ENCODE measurements at regions of chr19 and their contacts with region 1.

Region 1: GRCh38 chr19:47391510-47392223 is 27.7 kb downstream of the MEIS3 start:
- DNase-seq: peak; percentile 45 to 86 (median 77)
- ATAC-seq: peak; percentile 77 to 80 (median 78)
- H3K4me3 ChIP-seq: no peak overlapping the region
- H3K4me3 Mint-ChIP-seq: no peak overlapping the region
- H3K27ac ChIP-seq: no peak overlapping the region
- H3K27ac Mint-ChIP-seq: no peak overlapping the region
- H3K4me1 ChIP-seq: peaks cover 0 to 4% of the 10 kb centered on the region in 2 experiments
- H3K4me1 Mint-ChIP-seq: peaks cover 2 to 7% (median 5%) of the 10 kb centered on the region in 3 donors
- H3K27me3 ChIP-seq: peaks cover 0 to 13% of the 10 kb centered on the region in 2 experiments
- H3K27me3 Mint-ChIP-seq: peaks cover 11 to 19% of the 10 kb centered on the region in 2 donors

Region 2: DNA sequence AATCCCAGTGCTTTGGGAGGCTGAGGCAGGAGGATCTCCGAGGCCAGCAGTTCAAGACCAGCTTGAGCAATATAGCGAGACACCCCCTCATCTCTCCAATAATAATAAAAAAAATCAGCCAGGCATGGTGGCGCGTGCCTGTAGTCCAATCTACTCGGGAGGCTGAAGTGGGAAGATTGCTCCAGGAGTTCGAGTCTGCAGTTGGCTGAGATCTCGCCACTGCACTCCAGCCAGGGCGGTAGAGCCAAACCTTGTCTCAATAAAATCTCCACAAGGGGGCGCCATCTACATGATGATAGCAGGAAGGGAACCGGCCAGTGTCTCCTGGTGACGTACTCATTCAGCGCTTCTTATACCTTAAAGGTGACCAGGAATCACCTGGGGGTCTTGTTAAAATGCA is 95.6 kb before region 1 on chr19:
- CTCF ChIA-PET with region 1: interaction called in 1 of 2 experiments, 23 read pairs
- POLR2A ChIA-PET with region 1: no interaction called
- DNase-seq: peak; percentile 19 to 90 (median 63)
- ATAC-seq: peak; percentile 73 to 91 (median 82)
- H3K4me3 ChIP-seq: no peak overlapping the region
- H3K4me3 Mint-ChIP-seq: no peak overlapping the region
- H3K27ac ChIP-seq: no peak overlapping the region
- H3K27ac Mint-ChIP-seq: no peak overlapping the region
- H3K4me1 ChIP-seq: peaks cover 0 to 9% of the 10 kb centered on the region in 2 experiments
- H3K4me1 Mint-ChIP-seq: peaks cover 4 to 13% (median 9%) of the 10 kb centered on the region in 3 donors
- H3K27me3 ChIP-seq: no peaks in the 10 kb centered on the region
- H3K27me3 Mint-ChIP-seq: no peaks in the 10 kb centered on the region

Region 3: GRCh38 chr19:47370045-47370611 is 21.5 kb before region 1 on chr19:
- CTCF ChIA-PET with region 1: no interaction called
- POLR2A ChIA-PET with region 1: no interaction called
- DNase-seq: peak in 11 of 35 experiments; percentile 4 to 53 (median 15)
- ATAC-seq: no peak
- H3K4me3 ChIP-seq: no peak overlapping the region
- H3K4me3 Mint-ChIP-seq: no peak overlapping the region
- H3K27ac ChIP-seq: no peak overlapping the region
- H3K27ac Mint-ChIP-seq: no peak overlapping the region
- H3K4me1 ChIP-seq: no peaks in the 10 kb centered on the region
- H3K4me1 Mint-ChIP-seq: no peaks in the 10 kb centered on the region
- H3K27me3 ChIP-seq: no peaks in the 10 kb centered on the region
- H3K27me3 Mint-ChIP-seq: no peaks in the 10 kb centered on the region